GM12878 (cell line): ENCODE measurements at regions of chr12 and their contacts with region 1.

Region 1: GRCh38 chr12:6647083-6647604 is at the start of gene ACRBP:
- DNase-seq: no peak
- ATAC-seq: peak; percentile 93
- H3K4me3 ChIP-seq: peak within 1 kb of the TSS; percentile 49
- H3K27ac ChIP-seq: no peak within 1 kb of the TSS; the same call in 1 of the 2 replicates
- H3K4me1 ChIP-seq: peaks cover 14% of the 10 kb centered on the region
- H3K27me3 ChIP-seq: no peaks in the 10 kb centered on the region
- CTCF ChIP-seq: no peak
- EP300 ChIP-seq: no peak
- POLR2A ChIP-seq: peak; percentile 19; the same call in 1 of the 2 replicates
- RAD21 ChIP-seq: no peak
- polyA plus RNA-seq, gene ACRBP: 0.64 to 0.80 TPM

Region 2: DNA sequence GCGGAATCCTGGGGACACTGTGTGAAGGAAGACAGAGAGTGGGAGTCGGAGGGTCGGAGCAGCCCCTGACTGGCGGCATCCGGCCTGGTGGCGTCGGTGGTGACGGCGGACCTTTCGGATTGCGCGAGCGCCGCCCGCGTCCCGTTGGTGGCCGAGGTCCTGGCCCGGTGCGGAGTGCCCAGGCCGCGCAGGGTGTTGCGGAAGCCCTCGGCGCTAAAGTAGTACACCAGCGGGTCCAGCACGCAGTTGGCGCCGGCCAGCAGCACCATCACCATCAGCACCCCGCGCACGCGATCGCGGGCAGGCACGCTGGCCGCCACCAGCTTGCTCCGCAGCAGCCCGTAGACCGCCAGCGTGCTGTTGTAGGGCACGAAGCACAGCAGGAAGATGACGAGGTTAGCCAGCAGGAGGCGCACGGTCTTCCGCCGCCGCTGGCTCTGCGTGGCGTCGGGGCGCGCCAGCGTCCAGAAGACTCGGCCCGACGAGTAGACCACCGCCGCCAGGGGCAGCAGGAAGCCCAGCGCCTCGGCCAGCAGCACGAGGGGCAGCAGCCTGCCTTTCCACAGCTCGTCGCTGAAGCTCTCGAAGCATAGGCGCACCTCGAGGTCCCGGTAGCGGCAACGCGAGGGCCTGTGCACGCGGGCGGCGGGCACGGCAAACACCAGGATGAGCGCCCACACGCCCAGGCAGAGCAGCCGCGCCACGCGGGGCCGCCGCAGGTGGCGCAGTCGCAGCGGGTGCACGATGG is 26.8 kb before region 1 on chr12:
- CTCF ChIA-PET with region 1: interaction called, 23 read pairs
- POLR2A ChIA-PET with region 1: interaction called, 3 read pairs
- RAD21 ChIA-PET with region 1: interaction called, 5 read pairs
- SMC1A ChIA-PET with region 1: interaction called, 16 read pairs
- in situ Hi-C with region 1: no loop called
- intact Hi-C with region 1: no loop called
- DNase-seq: no peak
- ATAC-seq: no peak
- H3K4me3 ChIP-seq: no peak overlapping the region
- H3K27ac ChIP-seq: no peak overlapping the region
- H3K4me1 ChIP-seq: no peaks in the 10 kb centered on the region
- H3K27me3 ChIP-seq: no peaks in the 10 kb centered on the region
- CTCF ChIP-seq: no peak
- EP300 ChIP-seq: no peak
- POLR2A ChIP-seq: peak; percentile 38; the same call in 1 of the 2 replicates
- RAD21 ChIP-seq: no peak

Region 3: GRCh38 chr12:6632026-6632983 is 14.8 kb before region 1 on chr12:
- CTCF ChIA-PET with region 1: interaction called, 22 read pairs
- POLR2A ChIA-PET with region 1: interaction called, 47 read pairs
- RAD21 ChIA-PET with region 1: interaction called, 24 read pairs
- SMC1A ChIA-PET with region 1: interaction called, 23 read pairs
- in situ Hi-C with region 1: no loop called
- intact Hi-C with region 1: no loop called
- DNase-seq: peak; percentile 81
- ATAC-seq: peak; percentile 78
- H3K4me3 ChIP-seq: peak overlapping the region; percentile 57
- H3K27ac ChIP-seq: peak overlapping the region; percentile 90
- H3K4me1 ChIP-seq: peaks cover 52% of the 10 kb centered on the region
- H3K27me3 ChIP-seq: no peaks in the 10 kb centered on the region
- CTCF ChIP-seq: no peak
- EP300 ChIP-seq: peak in 1 of 2 experiments; percentile 12; a peak in 1 of 4 replicates
- POLR2A ChIP-seq: peak; percentile 85
- RAD21 ChIP-seq: no peak

Region 4: DNA sequence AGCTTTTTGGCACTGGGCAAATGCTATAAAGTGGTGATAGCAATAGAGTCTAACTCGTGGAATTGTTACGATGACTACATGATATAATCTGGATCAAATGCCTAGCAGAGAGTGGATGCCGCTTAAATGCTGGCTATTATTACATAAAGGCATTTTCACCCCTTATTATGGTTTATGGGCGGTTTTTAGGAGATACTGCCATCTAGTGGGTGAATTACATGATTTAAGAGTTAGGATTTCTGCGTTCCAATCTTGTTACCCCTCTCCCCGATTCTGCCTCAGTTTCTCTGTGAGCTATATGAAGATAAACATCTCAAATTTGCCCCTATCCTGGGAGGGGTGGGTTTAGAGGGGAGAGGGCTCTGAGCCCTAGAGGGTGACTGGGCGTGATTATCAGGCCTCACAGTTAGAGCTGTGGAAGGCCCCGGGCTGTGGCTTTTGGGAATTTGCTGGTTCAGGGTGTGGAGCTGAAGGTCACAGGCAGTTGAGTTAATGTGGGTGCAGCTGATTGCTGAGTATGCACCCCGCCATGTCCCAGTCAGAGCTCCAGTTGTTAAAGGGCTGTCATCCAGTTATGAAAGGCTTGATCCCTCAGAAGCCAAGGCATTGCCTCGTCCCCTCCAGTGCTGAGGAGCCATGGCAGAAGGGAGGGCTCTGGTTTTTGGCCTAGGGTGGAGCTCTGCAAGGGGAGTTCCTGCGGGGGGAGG is 497.4 kb after region 1 on chr12:
- CTCF ChIA-PET with region 1: no interaction called
- POLR2A ChIA-PET with region 1: no interaction called
- RAD21 ChIA-PET with region 1: no interaction called
- SMC1A ChIA-PET with region 1: no interaction called
- in situ Hi-C with region 1: no loop called
- intact Hi-C with region 1: no loop called
- DNase-seq: no peak
- ATAC-seq: peak; percentile 69
- H3K4me3 ChIP-seq: no peak overlapping the region
- H3K27ac ChIP-seq: no peak overlapping the region
- H3K4me1 ChIP-seq: no peaks in the 10 kb centered on the region
- H3K27me3 ChIP-seq: no peaks in the 10 kb centered on the region
- CTCF ChIP-seq: peak; percentile 42 to 53 (median 46); a peak in 4 of 6 replicates
- EP300 ChIP-seq: no peak
- POLR2A ChIP-seq: no peak
- RAD21 ChIP-seq: peak; percentile 27; the same call in 1 of the 2 replicates